Activated CD4-positive, alpha-beta memory T cell treated with anti-CD3 and anti-CD28 coated beads for 36 hours (primary cell): ENCODE measurements at regions of chr1 and their contacts with region 1.

Region 1: DNA sequence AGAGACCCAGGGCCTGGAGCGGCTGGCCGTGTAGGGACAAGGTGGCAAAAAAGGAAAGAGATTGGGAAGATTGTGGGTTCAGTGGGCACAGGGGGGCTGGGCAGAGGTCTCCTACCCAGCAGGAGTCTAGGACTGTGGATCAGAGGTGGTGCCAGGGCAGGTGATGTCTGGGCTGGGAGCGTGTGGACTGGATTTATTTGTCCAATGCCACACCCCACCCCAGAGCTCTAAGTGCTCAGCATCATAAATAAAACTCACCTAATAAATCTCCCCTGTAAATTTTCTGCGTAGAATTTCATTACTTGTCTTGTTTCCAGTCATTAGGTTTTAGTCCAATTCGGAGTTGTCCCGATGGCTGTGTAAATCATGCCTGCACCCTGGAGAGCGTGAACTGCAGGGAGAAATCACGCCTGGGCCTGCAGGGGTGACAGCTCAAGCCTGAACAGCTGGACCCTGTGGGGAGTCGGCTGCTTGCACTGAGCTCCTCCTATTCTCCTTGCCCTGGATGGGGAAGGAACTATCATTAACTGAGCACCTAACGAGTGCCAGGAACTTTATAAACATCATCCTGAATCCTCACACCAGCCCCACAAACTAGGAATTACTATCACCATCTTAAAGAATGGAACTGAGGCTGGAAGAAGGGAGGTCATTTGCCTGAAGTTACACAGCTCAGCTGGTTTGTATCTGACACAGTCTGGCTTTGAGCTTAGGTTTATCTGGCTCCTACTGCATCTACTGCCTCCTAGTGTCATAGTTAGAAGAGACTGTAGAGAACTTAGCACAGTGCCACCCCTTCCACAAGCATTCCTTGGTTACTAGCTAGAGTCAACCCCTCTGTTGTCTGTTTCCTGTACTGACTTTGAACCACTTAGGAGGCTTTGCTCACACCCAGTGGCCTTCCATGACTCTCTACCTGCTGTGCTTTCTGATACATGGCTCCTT is 25.0 kb upstream of the POU3F1 start:
- DNase-seq: no peak
- H3K4me3 Mint-ChIP-seq: no peak overlapping the region
- H3K27ac Mint-ChIP-seq: no peak overlapping the region
- H3K4me1 Mint-ChIP-seq: no peaks in the 10 kb centered on the region
- H3K27me3 Mint-ChIP-seq: peaks cover 26% of the 10 kb centered on the region

Region 2: DNA sequence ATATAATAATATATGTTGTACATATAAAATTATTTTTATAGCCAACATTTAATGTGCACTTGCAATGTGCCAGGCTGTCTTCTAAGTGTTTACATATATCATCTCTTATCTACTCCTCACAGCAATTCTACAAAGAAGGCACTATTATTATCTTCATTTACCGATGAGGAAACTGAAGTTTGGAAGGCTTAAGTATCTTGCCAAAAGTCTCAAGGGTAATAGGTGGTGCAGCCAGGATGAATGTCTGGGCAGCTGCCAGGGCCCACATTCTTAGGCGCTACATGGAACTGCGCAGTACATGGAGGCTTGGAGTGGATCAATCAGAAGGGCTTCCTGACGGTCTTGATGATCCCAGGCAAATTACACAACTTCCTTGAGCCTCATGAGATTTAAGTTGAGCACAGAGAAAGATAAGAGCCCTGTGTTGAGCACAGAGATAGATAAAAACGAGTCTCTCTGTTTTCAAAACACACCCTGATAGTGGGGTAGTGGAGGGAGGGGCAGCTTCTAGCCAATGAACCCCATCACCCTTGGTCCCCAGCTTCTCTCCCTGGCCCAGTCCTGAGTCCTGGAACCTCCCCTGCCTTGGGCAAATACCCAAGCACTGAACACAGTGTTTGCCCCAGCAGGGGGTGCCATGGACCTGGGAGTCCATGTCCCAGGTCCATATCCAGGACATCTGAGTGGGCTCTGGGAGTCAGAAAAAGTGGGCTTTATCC is 34.2 kb before region 1 on chr1:
- CTCF ChIA-PET with region 1: interaction called, 12 read pairs
- POLR2A ChIA-PET with region 1: no interaction called
- intact Hi-C with region 1: no loop called
- DNase-seq: peak; percentile 28
- H3K4me3 Mint-ChIP-seq: no peak overlapping the region
- H3K27ac Mint-ChIP-seq: no peak overlapping the region
- H3K4me1 Mint-ChIP-seq: no peaks in the 10 kb centered on the region
- H3K27me3 Mint-ChIP-seq: peaks cover 26% of the 10 kb centered on the region

Region 3: DNA sequence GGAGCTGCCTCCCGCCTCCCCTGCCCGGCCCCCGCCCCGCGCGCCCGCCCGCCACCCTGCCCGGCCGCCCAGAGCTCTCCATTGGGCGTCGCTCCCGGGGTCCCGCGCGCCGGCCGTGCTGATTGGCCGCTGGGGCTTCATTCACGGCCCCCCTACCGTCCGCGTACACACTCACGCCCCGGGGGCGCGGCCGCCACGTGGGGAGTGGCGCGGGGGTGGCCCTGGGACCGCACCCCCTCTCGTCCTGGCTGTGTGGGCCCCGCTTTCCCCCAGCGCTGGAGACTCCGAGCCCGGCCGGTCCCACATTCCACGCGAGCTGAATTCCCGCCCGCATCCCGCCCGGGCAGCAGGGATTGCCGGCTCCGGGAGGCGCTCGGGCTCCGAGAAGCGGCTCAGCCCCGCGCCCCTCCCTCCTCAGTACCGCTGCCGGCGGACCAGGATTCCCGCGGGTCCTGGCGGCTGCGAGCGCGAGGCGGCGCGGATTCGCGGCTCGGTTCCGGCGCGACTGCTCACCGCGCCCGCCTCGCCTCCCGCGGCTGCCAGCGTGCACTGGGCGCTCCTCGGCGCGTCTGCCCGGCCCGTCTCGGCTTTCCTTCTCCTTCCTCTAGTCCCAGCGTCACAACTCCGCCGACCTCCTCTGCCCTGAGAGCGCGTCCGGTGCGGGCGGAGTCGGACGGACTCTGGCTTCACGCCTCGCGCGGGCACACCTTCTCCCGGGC is 24.5 kb before region 1 on chr1:
- CTCF ChIA-PET with region 1: interaction called, 22 read pairs
- POLR2A ChIA-PET with region 1: no interaction called
- intact Hi-C with region 1: no loop called
- DNase-seq: peak; percentile 78
- H3K4me3 Mint-ChIP-seq: peak overlapping the region; percentile 69
- H3K27ac Mint-ChIP-seq: no peak overlapping the region
- H3K4me1 Mint-ChIP-seq: peaks cover 7% of the 10 kb centered on the region
- H3K27me3 Mint-ChIP-seq: peaks cover 37% of the 10 kb centered on the region

Region 4: DNA sequence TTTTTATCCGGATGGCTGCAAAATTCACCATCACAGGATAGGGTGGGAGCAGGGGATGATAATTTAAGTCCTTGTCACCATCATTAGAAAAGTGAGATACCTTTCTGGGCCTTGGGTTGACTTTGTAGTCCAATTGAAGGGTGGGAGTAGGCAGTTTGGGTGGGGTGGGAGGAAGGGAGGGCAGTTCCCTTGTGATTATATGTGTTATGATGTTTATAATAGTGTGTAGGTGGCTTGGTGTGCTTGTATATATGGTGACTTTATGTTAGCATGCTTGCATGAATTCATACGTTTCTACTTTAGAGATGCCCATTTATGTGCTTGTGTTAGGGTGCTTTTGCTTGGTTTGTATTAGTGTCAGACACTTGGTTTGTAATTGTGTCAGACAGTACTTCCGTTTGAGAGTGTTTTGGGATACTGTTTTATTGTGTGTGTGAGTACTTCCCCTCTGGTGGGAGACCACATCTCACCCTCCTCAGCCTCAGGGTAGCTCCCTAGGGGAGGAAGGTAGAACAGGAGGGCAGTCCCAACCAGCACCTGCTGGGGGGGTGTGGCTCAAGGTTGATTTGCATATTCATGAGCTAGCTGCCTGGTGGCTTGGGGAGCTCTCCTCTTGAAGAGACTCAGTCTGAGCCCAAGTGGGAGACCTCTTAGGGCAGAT is 18.7 kb before region 1 on chr1:
- CTCF ChIA-PET with region 1: interaction called, 22 read pairs
- POLR2A ChIA-PET with region 1: no interaction called
- intact Hi-C with region 1: no loop called
- DNase-seq: no peak
- H3K4me3 Mint-ChIP-seq: no peak overlapping the region
- H3K27ac Mint-ChIP-seq: no peak overlapping the region
- H3K4me1 Mint-ChIP-seq: peaks cover 10% of the 10 kb centered on the region
- H3K27me3 Mint-ChIP-seq: peaks cover 6% of the 10 kb centered on the region